Caco-2 (cell line): ENCODE measurements at regions of chr11 and their contacts with region 1.

Region 1: DNA sequence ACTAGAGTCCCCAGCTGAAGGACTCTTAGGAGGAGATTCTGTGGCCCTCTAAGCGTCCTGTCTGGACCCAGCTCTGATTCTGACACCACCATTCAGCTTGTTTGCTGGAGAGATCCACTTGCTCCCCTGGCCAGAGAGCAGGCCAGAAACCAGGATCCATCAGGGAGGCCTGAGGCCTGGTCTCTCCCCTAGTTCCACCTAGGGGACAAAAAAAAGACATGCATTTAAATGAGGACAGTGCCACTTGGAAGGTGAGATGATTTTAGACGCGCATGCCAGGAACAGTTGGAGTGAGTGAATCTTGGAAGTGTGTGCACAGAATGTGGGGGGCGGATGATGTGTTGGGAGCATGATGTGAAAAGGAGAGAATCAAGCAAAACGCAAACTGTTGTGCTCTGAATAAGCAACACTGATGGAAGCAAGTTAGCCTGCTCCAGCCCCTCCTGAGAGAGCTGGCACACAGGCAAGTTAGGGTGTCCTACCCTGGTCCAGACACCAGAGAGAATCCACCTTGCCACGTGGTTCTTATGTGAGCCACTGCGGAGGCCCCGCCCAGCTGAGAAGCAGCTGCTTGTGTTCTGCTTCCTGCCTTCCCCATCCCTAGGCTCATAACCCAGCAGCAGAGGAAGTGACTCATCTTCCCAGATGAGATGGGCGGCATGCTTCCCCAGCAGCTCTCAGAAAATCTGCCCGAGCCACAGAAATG is 8.0 kb upstream of the SLCO2B1 start:
- DNase-seq: peak in 1 of 2 experiments; percentile 78
- H3K4me3 ChIP-seq: no peak overlapping the region
- H3K4me3 Mint-ChIP-seq: no peak overlapping the region
- H3K27ac Mint-ChIP-seq: no peak overlapping the region
- H3K4me1 ChIP-seq: peaks cover 45% of the 10 kb centered on the region
- H3K4me1 Mint-ChIP-seq: peaks cover 43% of the 10 kb centered on the region
- H3K27me3 ChIP-seq: no peaks in the 10 kb centered on the region
- H3K27me3 Mint-ChIP-seq: peaks cover 4% of the 10 kb centered on the region
- CTCF ChIP-seq: no peak

Region 2: DNA sequence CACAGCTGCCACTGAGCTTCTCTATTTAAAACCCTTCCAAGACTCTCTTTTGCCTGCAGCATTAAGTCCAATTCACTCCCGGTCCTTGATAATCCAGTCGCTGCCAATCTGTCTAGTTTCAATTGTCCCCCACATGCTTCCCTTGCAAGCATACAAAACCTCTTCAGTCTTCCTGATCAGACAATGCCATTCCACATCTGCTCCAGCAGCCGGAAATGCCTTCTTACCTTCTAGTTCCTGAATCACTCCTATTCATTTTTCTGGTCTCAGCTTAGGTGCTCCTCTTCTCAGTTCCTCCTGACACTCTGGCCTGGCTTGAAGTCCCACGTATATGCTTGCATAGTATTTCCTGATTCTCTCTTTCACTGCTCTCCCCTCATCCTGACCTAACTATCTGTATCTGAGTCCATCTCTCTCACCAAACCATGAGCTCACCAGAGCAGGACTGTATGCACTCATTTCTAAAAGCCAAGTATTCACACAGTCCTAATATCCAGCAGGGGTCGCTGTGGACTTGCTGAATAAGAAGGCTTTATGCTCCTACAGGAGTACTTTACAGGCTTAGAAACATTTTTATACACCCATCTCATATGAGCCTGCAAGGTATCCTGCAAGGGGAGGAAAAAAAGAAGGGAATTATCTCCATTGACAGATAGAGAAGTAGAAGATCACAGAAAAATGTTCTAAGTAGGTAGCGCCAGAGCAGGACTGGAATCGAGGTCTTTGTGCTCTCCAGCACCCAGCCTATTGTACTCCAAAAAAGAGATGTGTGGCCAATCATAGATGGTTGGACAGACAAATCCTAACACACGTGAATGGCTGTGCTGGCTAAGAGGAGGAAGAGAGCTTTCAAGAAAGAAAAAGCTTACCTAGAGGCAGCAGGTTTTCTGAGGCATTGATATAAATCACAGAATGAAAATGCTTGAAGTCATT is 213.2 kb before region 1 on chr11:
- CTCF ChIA-PET with region 1: interaction called, 34 read pairs
- POLR2A ChIA-PET with region 1: interaction called, 5 read pairs
- intact Hi-C with region 1: loop called (anchors 1 kb)
- DNase-seq: peak; percentile 84
- H3K4me3 ChIP-seq: no peak overlapping the region
- H3K4me3 Mint-ChIP-seq: no peak overlapping the region
- H3K27ac Mint-ChIP-seq: no peak overlapping the region
- H3K4me1 ChIP-seq: 0 out of 2 replicates have a peak, but pooled peaks cover 6% of the 10 kb centered on the region
- H3K4me1 Mint-ChIP-seq: no peaks in the 10 kb centered on the region
- H3K27me3 ChIP-seq: no peaks in the 10 kb centered on the region
- H3K27me3 Mint-ChIP-seq: no peaks in the 10 kb centered on the region
- CTCF ChIP-seq: peak; percentile 96

Region 3: GRCh38 chr11:75160192-75160757 is 17.4 kb after region 1 on chr11:
- CTCF ChIA-PET with region 1: interaction called, 86 read pairs
- POLR2A ChIA-PET with region 1: interaction called, 43 read pairs
- intact Hi-C with region 1: loop called (anchors 1 kb)
- DNase-seq: peak; percentile 61 to 75
- H3K4me3 ChIP-seq: peak overlapping the region; percentile 39
- H3K4me3 Mint-ChIP-seq: peak overlapping the region; percentile 84
- H3K27ac Mint-ChIP-seq: peak overlapping the region; percentile 97
- H3K4me1 ChIP-seq: peaks cover 98% of the 10 kb centered on the region
- H3K4me1 Mint-ChIP-seq: peaks cover 74% of the 10 kb centered on the region
- H3K27me3 ChIP-seq: no peaks in the 10 kb centered on the region
- H3K27me3 Mint-ChIP-seq: no peaks in the 10 kb centered on the region
- CTCF ChIP-seq: no peak

Region 4: GRCh38 chr11:75182669-75183068 is 39.8 kb after region 1 on chr11:
- CTCF ChIA-PET with region 1: interaction called, 10 read pairs
- POLR2A ChIA-PET with region 1: interaction called, 4 read pairs
- intact Hi-C with region 1: loop called (anchors 5 kb)
- DNase-seq: no peak
- H3K4me3 ChIP-seq: no peak overlapping the region
- H3K4me3 Mint-ChIP-seq: no peak overlapping the region
- H3K27ac Mint-ChIP-seq: no peak overlapping the region
- H3K4me1 ChIP-seq: peaks cover 22% of the 10 kb centered on the region; the same call in 1 of the 2 replicates
- H3K4me1 Mint-ChIP-seq: peaks cover 22% of the 10 kb centered on the region
- H3K27me3 ChIP-seq: no peaks in the 10 kb centered on the region
- H3K27me3 Mint-ChIP-seq: no peaks in the 10 kb centered on the region
- CTCF ChIP-seq: no peak

Region 5: GRCh38 chr11:75195121-75195551 is 52.3 kb after region 1 on chr11:
- CTCF ChIA-PET with region 1: interaction called, 887 read pairs
- POLR2A ChIA-PET with region 1: no interaction called
- intact Hi-C with region 1: no loop called
- DNase-seq: no peak
- H3K4me3 ChIP-seq: no peak overlapping the region
- H3K4me3 Mint-ChIP-seq: no peak overlapping the region
- H3K27ac Mint-ChIP-seq: no peak overlapping the region
- H3K4me1 ChIP-seq: no peaks in the 10 kb centered on the region
- H3K4me1 Mint-ChIP-seq: peaks cover 7% of the 10 kb centered on the region
- H3K27me3 ChIP-seq: no peaks in the 10 kb centered on the region
- H3K27me3 Mint-ChIP-seq: no peaks in the 10 kb centered on the region
- CTCF ChIP-seq: no peak

Region 6: DNA sequence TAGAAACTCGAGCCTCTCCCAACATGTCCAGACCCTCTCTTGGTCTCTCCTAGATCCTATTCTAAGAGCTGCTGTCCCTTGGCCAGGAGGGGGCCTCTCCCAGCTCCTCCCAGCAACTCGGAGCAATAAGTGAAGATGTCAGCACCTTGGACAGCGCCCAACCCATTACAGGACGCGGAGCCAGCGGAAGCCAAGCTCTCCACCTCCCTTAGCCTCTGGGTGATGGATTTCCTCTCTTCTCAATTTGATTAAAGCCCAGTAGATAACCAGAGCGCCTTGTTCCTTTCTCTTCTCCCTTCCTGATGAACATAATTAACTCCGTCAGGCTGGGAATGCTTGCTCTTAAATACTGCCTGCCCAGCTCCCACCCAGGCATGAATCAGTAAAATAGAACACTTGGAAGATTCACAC is 71.5 kb after region 1 on chr11:
- CTCF ChIA-PET with region 1: interaction called, 887 read pairs
- POLR2A ChIA-PET with region 1: no interaction called
- intact Hi-C with region 1: no loop called
- DNase-seq: peak; percentile 95 to 97
- H3K4me3 ChIP-seq: no peak overlapping the region
- H3K4me3 Mint-ChIP-seq: no peak overlapping the region
- H3K27ac Mint-ChIP-seq: no peak overlapping the region
- H3K4me1 ChIP-seq: no peaks in the 10 kb centered on the region
- H3K4me1 Mint-ChIP-seq: no peaks in the 10 kb centered on the region
- H3K27me3 ChIP-seq: no peaks in the 10 kb centered on the region
- H3K27me3 Mint-ChIP-seq: peaks cover 23% of the 10 kb centered on the region
- CTCF ChIP-seq: peak; percentile 78 to 95

Region 7: DNA sequence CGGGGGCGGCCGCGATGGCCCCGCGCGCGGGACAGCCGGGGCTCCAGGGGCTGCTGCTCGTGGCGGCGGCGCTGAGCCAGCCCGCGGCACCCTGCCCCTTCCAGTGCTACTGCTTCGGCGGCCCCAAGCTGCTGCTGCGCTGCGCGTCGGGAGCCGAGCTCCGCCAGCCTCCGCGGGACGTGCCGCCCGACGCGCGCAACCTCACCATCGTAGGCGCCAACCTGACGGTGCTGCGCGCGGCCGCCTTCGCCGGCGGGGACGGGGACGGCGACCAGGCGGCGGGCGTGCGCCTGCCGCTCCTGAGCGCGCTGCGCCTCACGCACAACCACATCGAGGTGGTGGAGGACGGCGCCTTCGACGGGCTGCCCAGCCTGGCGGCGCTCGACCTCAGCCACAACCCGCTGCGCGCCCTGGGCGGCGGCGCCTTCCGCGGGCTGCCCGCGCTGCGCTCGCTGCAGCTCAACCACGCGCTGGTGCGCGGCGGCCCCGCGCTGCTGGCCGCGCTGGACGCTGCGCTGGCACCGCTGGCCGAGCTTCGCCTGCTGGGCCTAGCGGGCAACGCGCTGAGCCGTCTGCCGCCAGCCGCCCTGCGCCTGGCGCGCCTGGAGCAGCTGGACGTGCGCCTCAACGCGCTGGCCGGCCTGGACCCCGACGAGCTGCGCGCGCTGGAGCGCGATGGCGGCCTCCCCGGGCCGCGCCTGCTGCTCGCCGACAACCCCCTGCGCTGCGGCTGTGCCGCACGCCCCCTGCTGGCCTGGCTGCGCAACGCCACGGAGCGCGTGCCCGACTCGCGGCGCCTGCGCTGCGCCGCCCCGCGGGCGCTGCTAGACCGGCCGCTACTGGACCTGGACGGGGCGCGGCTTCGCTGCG is 98.4 kb after region 1 on chr11:
- CTCF ChIA-PET with region 1: interaction called, 437 read pairs
- POLR2A ChIA-PET with region 1: no interaction called
- intact Hi-C with region 1: loop called (anchors 1 kb)
- DNase-seq: peak; percentile 88 to 99
- H3K4me3 ChIP-seq: peak overlapping the region; percentile 47
- H3K4me3 Mint-ChIP-seq: peak overlapping the region; percentile 62
- H3K27ac Mint-ChIP-seq: no peak overlapping the region
- H3K4me1 ChIP-seq: peaks cover 10% of the 10 kb centered on the region; the same call in 1 of the 2 replicates
- H3K4me1 Mint-ChIP-seq: no peaks in the 10 kb centered on the region
- H3K27me3 ChIP-seq: peaks cover 6% of the 10 kb centered on the region
- H3K27me3 Mint-ChIP-seq: peaks cover 30% of the 10 kb centered on the region
- CTCF ChIP-seq: peak; percentile 67 to 99